AG04449 (cell line): ENCODE measurements at regions of chrX and their contacts with region 1.

Region 1: GRCh38 chrX:129905787-129906580 is at the start of gene UTP14A:
- DNase-seq: peak; percentile 29
- H3K4me3 ChIP-seq: peak within 1 kb of the TSS; percentile 69
- CTCF ChIP-seq: no peak

Region 2: DNA sequence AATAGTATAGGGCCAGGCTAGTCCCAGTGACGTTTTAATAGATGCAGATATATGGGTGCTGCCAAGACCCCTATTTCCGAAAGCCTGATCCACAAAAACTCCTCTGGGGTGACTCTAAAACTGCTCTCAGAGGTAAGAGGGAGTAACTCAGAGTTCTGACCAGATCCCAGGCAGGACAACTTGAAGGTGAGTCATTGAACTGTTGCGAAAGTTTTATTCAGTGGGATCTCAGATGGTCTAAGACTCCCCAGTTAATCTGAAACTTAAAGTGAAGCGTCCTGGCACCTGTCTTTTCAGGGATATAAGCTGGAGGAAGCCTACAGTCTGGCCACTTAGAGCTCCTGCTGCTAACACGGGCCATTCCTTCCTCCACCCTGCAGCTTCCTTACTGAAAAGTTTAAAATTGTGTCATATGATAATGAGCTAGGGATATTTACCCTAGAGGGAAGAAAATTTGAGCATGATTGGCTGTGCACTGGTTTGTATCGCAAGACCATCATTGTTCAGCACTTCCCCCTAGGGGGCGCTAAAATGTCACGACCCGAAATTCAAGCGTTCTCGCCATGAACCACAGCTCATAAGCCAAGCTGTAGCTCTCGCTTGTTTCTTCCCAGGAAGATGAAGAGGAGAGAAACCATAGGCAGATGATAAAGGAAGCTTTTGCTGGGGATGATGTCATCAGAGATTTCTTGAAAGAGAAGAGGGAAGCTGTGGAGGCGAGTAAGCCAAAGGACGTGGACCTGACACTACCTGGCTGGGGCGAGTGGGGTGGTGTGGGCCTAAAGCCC is 19.5 kb after region 1 on chrX:
- CTCF ChIA-PET with region 1: interaction called, 16 read pairs
- POLR2A ChIA-PET with region 1: no interaction called
- DNase-seq: no peak
- H3K4me3 ChIP-seq: no peak overlapping the region
- CTCF ChIP-seq: peak; percentile 43

Region 3: DNA sequence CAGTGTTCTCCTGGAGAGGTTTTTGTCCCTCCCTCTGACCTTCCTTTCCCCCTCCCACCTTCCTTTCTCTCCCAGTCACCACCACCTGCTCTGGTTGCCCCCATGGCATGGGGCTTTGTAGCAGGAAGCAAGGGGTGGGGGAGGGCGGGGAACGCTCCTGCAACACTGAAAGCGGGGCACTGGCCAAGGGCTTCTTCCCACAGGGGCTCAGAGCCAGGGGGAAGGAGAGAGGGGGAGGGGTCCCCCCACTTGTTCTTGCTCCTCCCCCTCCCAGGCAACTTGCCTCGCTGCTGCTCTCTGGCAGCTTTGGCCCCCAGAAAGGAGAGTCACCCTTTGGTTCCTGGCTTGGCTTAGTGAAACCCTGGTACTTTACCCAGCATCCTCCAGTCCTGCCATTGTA is 124.8 kb after region 1 on chrX:
- CTCF ChIA-PET with region 1: no interaction called
- POLR2A ChIA-PET with region 1: no interaction called
- DNase-seq: no peak
- H3K4me3 ChIP-seq: no peak overlapping the region
- CTCF ChIP-seq: no peak

Region 4: GRCh38 chrX:130170752-130171445 is 264.9 kb after region 1 on chrX:
- CTCF ChIA-PET with region 1: no interaction called
- POLR2A ChIA-PET with region 1: no interaction called
- DNase-seq: no peak
- H3K4me3 ChIP-seq: peak overlapping the region; percentile 53
- CTCF ChIP-seq: no peak